AG04449 (cell line): ENCODE measurements at regions of chr17 and their contacts with region 1.

Region 1: DNA sequence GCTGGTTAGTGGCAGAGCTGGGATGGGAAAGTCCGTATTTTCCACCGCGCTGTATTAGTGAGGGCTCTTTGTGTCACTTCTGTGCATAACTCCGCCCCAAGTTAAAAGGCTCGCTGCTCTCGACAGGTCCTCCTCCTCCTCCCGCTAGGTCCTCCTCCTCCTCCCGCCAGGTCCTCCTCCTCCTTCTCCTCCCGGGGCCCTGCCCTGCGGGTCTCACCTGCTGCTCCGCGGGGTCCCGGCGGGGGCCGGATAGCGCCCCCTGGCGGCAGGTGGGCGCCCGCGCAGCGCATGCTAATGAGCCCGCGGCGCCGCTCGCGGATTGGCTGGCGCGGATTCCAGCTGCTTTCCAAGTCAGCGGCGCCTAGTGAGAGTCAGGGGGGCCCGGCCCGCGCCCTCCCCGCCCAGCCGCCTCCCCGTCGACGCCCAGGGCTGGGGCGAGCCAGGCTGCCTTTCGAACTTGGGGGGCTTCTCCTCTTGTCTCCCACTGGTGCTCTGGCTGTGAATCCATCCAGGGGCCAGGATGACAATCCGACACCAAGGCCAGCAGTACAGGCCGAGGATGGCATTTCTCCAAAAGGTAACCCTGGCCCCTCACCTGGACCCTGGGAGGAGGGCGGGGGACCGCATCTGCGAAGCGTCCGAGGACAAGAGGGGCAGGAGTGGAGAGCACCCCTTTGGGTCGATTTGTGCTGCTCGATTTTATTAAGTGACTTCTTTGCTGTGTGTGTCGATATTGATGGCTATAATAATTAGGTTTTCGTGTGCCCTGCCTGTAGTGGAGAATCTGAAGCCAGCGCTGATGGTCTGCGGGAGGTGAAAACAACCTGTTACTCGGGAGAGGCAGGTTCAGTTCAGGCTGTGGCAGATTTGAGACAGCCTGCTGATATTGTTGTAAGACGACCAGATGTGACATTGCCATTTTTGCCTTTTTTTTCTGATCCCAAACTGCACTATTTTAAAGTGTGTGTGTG is at the start of gene RGS9:
- DNase-seq: no peak
- H3K4me3 ChIP-seq: peak within 1 kb of the TSS; percentile 50
- CTCF ChIP-seq: peak; percentile 85

Region 2: GRCh38 chr17:65154770-65155621 is 17.7 kb after region 1 on chr17:
- CTCF ChIA-PET with region 1: interaction called, 60 read pairs
- POLR2A ChIA-PET with region 1: no interaction called
- DNase-seq: no peak
- H3K4me3 ChIP-seq: no peak overlapping the region
- CTCF ChIP-seq: no peak

Region 3: GRCh38 chr17:65177901-65178300 is 40.6 kb after region 1 on chr17:
- CTCF ChIA-PET with region 1: interaction called, 18 read pairs
- POLR2A ChIA-PET with region 1: no interaction called
- DNase-seq: no peak
- H3K4me3 ChIP-seq: no peak overlapping the region
- CTCF ChIP-seq: no peak